CD8-positive, alpha-beta T cell (primary cell): ENCODE measurements at regions of chr9 and their contacts with region 1.

Region 1: GRCh38 chr9:129258124-129258822 is 80.2 kb upstream of the IER5L start:
- DNase-seq: peak; percentile 77 to 96 (median 89)
- ATAC-seq: peak; percentile 88
- H3K4me3 ChIP-seq: peak overlapping the region; percentile 38 to 42
- H3K4me3 Mint-ChIP-seq: peak overlapping the region; percentile 75
- H3K27ac ChIP-seq: no peak overlapping the region
- H3K27ac Mint-ChIP-seq: no peak overlapping the region
- H3K4me1 ChIP-seq: peaks cover 24% of the 10 kb centered on the region
- H3K4me1 Mint-ChIP-seq: peaks cover 23% of the 10 kb centered on the region
- H3K27me3 ChIP-seq: peaks cover 0 to 3% of the 10 kb centered on the region in 2 experiments
- H3K27me3 Mint-ChIP-seq: peaks cover 5% of the 10 kb centered on the region
- CTCF ChIP-seq: no peak

Region 2: DNA sequence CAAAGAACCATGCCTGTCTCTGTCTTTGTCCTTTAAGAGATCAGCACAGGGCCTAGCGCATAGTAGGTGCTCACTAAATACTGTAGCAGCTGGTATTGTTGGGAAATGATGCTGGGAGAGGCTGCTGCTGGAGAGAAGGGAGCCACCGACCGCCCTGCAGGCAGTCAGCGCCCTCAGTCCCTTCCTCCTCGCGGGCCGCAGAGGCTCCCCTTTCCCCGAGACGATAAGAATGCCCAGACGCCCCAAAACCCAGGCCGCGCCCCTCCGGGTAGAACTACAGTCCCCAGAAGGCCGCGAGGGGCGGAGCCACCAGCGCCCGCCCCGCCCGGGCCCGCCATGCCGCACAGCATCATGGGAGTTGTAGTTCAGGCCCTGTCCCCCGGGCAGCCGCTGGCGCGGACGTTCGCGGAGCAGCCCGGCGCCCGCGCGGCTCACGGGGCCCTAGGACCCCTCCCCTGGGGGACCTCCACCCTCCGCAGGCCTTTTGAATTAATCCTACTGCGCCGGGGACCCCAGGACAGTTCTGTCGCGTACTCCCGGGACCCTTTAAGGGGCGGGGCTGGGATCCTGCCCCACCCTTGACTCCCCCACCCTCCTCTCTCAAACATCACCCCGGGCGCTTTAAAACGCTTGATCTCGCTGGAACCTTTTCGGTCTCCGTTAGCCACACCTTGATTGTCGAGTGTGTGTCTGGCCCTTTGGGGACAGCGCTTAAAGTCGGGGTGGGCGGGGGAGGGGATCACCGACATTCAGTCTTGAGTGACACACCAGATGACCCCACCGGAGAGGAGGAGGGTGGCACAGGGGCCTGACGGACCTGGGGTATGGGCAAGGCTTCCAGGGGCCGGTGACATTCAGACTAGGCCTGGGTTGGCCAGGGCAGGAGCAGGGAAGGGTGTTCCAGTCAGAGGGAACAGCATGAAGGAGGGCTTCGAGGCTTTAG is 55.4 kb before region 1 on chr9:
- CTCF ChIA-PET with region 1: no interaction called
- POLR2A ChIA-PET with region 1: no interaction called
- intact Hi-C with region 1: loop called (anchors 2 kb)
- DNase-seq: peak; percentile 84 to 96 (median 90)
- ATAC-seq: peak; percentile 93
- H3K4me3 ChIP-seq: peak overlapping the region; percentile 56 to 95
- H3K4me3 Mint-ChIP-seq: peak overlapping the region; percentile 78
- H3K27ac ChIP-seq: peak overlapping the region; percentile 62 to 65
- H3K27ac Mint-ChIP-seq: peak overlapping the region; percentile 79
- H3K4me1 ChIP-seq: peaks cover 30% of the 10 kb centered on the region
- H3K4me1 Mint-ChIP-seq: peaks cover 28% of the 10 kb centered on the region
- H3K27me3 ChIP-seq: no peaks in the 10 kb centered on the region
- H3K27me3 Mint-ChIP-seq: no peaks in the 10 kb centered on the region
- CTCF ChIP-seq: no peak

Region 3: GRCh38 chr9:129225815-129226214 is 32.5 kb before region 1 on chr9:
- CTCF ChIA-PET with region 1: no interaction called
- POLR2A ChIA-PET with region 1: no interaction called
- intact Hi-C with region 1: loop called in 1 of 2 experiments (anchors 5 kb)
- DNase-seq: peak in 8 of 9 experiments; percentile 46 to 79 (median 62)
- ATAC-seq: peak; percentile 75
- H3K4me3 ChIP-seq: no peak overlapping the region
- H3K4me3 Mint-ChIP-seq: peak overlapping the region; percentile 50
- H3K27ac ChIP-seq: peak overlapping the region in 1 of 2 experiments; percentile 50
- H3K27ac Mint-ChIP-seq: peak overlapping the region; percentile 82
- H3K4me1 ChIP-seq: peaks cover 34% of the 10 kb centered on the region
- H3K4me1 Mint-ChIP-seq: peaks cover 42% of the 10 kb centered on the region
- H3K27me3 ChIP-seq: no peaks in the 10 kb centered on the region
- H3K27me3 Mint-ChIP-seq: no peaks in the 10 kb centered on the region
- CTCF ChIP-seq: no peak

Region 4: GRCh38 chr9:129944506-129945116 is 686.3 kb after region 1 on chr9:
- CTCF ChIA-PET with region 1: no interaction called
- POLR2A ChIA-PET with region 1: no interaction called
- intact Hi-C with region 1: no loop called
- DNase-seq: peak; percentile 21 to 90 (median 45)
- ATAC-seq: peak; percentile 88
- H3K4me3 ChIP-seq: no peak overlapping the region
- H3K4me3 Mint-ChIP-seq: peak overlapping the region; percentile 9
- H3K27ac ChIP-seq: peak overlapping the region; percentile 68 to 73
- H3K27ac Mint-ChIP-seq: peak overlapping the region; percentile 83
- H3K4me1 ChIP-seq: peaks cover 55% of the 10 kb centered on the region
- H3K4me1 Mint-ChIP-seq: peaks cover 51% of the 10 kb centered on the region
- H3K27me3 ChIP-seq: no peaks in the 10 kb centered on the region
- H3K27me3 Mint-ChIP-seq: no peaks in the 10 kb centered on the region
- CTCF ChIP-seq: peak; percentile 27